CD8-positive, alpha-beta T cell (primary cell): ENCODE measurements at regions of chr20 and their contacts with region 1.

Region 1: DNA sequence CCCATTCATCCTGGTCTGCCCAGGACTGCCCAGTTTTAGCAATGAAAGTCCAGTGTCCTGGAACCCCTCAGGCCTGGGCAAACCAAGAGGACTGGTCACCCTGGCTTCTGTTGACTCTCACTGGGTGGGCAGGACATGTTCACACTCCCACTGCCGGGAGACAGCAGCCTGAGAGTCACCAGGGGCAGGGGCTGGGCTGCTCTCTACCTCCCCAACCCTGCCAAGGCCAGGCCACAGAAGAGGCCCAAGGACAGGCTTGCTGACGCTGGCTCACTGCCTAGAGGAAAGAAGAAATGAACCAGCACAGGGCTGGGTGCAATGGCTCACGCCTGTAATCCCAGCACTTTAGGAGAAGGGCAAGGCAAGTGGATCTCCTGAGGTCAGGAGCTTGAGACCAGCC is 36.9 kb downstream of the C20orf203 start:
- DNase-seq: no peak
- ATAC-seq: no peak
- H3K4me3 ChIP-seq: no peak overlapping the region
- H3K4me3 Mint-ChIP-seq: no peak overlapping the region
- H3K27ac ChIP-seq: no peak overlapping the region
- H3K27ac Mint-ChIP-seq: no peak overlapping the region
- H3K4me1 ChIP-seq: no peaks in the 10 kb centered on the region
- H3K4me1 Mint-ChIP-seq: no peaks in the 10 kb centered on the region
- H3K27me3 ChIP-seq: no peaks in the 10 kb centered on the region
- H3K27me3 Mint-ChIP-seq: no peaks in the 10 kb centered on the region
- CTCF ChIP-seq: no peak

Region 2: DNA sequence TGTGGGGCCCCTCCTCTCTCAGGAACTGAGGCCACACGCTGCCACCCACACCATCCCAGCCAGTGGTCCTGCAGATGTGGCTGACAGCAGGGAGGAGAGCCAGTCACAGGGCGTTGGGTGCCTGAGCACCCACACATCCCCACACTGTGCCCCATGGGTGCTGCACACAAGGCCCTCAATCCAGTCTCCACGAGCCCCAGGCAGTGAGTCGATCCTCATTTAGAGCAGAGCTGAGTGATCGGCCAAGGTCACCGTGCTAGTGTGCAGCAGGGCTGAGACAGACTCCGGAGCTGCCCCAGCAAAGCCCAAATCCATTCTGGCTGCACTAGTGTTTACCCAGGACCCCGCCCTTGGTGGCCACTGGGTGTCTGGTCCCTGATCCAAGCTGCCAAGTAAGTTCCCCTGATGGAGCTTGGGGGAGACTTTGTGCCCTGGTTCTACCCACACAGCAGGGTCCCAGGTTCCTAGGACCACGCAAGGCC is 27.9 kb after region 1 on chr20:
- CTCF ChIA-PET with region 1: no interaction called
- POLR2A ChIA-PET with region 1: interaction called, 3 read pairs
- intact Hi-C with region 1: loop called in 1 of 2 experiments (anchors 1 kb)
- DNase-seq: no peak
- ATAC-seq: no peak
- H3K4me3 ChIP-seq: no peak overlapping the region
- H3K4me3 Mint-ChIP-seq: no peak overlapping the region
- H3K27ac ChIP-seq: no peak overlapping the region
- H3K27ac Mint-ChIP-seq: no peak overlapping the region
- H3K4me1 ChIP-seq: no peaks in the 10 kb centered on the region
- H3K4me1 Mint-ChIP-seq: peaks cover 3% of the 10 kb centered on the region
- H3K27me3 ChIP-seq: no peaks in the 10 kb centered on the region
- H3K27me3 Mint-ChIP-seq: no peaks in the 10 kb centered on the region
- CTCF ChIP-seq: no peak